ENCODE measurements at regions of chr18 and their contacts with region 1.

Region 1: DNA sequence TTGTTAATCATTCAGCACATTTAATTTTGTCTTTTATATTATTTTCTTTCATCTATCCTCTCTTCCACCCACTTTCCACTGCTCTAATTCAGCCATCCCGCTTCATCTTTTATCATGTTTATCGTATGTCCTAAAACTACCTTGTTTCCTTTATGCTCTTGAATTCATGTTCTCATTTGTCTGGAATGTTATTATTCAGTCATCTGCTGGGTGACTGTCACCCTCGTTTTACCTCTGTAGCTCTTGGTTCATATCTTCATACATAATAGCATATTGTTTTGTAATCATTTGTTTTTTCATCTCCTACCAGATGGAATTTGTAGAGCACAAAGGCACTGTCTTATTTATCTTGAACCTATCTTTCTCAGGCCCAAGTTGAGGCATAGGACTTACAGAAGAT is 37.0 kb downstream of the SMCHD1 start:
- DNase-seq: no peak
- ATAC-seq: no peak
- H3K4me3 Mint-ChIP-seq: no peak overlapping the region
- H3K27ac Mint-ChIP-seq: no peak overlapping the region
- H3K4me1 Mint-ChIP-seq: peaks cover 21% of the 10 kb centered on the region
- H3K27me3 Mint-ChIP-seq: no peaks in the 10 kb centered on the region
- CTCF ChIP-seq: no peak

Region 2: DNA sequence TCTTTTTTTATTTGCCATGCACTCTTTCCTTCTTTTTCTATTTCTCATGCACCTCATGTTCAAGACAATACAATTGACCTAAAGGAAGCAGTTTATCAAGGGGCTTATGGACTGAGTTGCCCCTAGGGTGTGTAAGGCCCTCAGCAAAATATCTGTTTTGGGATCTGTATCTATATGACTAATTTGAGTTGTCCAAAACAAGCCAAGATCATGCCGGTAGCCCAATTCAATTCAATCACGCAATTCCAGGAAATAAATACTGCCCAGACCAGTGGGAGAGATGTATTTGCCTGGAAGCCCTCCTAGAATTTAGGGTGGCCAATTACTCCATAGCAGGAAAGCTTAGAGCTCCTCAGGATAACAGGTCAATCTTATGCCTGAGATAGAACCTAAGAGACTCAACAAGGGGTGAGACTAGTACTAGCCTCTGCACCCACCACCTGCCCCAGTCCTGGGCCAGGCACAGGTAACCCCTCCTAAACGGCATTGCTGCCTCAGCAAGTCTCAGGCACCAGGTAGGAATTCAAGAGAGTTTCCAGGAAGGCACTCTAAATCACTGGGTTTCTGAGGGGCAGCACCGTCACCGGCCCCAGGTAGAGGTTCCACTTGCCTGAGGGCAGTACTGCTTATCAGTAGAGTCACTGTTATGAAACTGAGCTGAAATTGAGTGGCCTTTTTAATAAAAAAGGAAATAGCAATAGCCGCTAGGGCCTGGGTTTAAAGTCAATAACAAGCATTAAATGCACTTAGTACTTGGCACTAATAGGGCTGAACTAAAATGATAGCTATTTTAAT is 775.2 kb before region 1 on chr18:
- CTCF ChIA-PET with region 1: no interaction called
- POLR2A ChIA-PET with region 1: no interaction called
- intact Hi-C with region 1: no loop called
- DNase-seq: no peak
- ATAC-seq: no peak
- H3K4me3 Mint-ChIP-seq: no peak overlapping the region
- H3K27ac Mint-ChIP-seq: no peak overlapping the region
- H3K4me1 Mint-ChIP-seq: no peaks in the 10 kb centered on the region
- H3K27me3 Mint-ChIP-seq: no peaks in the 10 kb centered on the region
- CTCF ChIP-seq: no peak

Region 3: DNA sequence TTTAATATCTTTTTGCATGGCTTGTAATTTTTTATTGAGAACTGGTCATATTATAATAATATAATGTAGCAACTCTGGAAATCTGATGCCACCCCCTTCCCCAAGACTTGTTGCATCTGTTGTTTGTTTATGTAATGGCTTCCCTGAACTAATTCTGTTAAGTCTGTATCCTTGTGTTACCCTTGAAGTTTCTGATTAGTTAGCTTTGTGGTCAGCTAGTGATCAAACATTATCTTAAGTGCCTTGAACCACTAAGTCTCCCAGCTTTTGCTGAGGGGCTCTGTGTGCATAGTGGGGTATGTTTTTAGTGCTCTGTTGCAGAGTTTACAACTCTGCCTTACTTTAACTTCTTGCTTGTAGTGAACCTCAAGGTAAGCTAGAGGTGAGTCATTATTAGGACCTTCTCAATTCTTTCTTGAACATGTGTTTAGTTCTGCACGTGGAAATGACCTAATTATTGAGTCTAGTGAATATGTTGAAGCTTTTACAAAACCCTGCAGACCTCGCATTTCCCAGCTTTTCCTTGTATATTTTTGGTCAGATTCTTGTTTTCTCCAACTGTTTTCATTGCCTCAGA is 12.2 kb before region 1 on chr18:
- CTCF ChIA-PET with region 1: no interaction called
- POLR2A ChIA-PET with region 1: no interaction called
- intact Hi-C with region 1: loop called (anchors 2 kb)
- DNase-seq: no peak
- ATAC-seq: no peak
- H3K4me3 Mint-ChIP-seq: no peak overlapping the region
- H3K27ac Mint-ChIP-seq: peak overlapping the region; percentile 47
- H3K4me1 Mint-ChIP-seq: peaks cover 35% of the 10 kb centered on the region
- H3K27me3 Mint-ChIP-seq: no peaks in the 10 kb centered on the region
- CTCF ChIP-seq: no peak

Region 4: DNA sequence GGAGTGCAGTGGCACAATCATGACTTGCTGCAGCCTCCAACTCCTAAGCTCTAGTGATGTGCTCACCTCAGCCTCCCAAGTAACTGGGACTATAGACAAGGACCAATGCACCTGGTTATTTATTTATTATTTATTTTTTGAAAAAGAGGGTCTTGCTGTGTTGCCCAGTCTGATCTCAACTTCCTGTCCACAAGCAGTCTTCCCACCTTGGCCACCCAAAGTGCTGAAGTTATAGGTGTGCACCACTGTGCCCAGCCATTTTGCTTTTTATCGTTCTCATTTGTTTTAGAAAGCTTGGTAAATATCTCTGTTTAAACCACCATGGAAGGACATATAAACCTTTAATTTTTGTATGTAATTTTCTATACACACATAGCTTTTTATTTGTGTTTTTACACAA is 37.2 kb after region 1 on chr18:
- CTCF ChIA-PET with region 1: no interaction called
- POLR2A ChIA-PET with region 1: no interaction called
- intact Hi-C with region 1: loop called (anchors 5 kb)
- DNase-seq: no peak
- ATAC-seq: no peak
- H3K4me3 Mint-ChIP-seq: no peak overlapping the region
- H3K27ac Mint-ChIP-seq: no peak overlapping the region
- H3K4me1 Mint-ChIP-seq: peaks cover 3% of the 10 kb centered on the region
- H3K27me3 Mint-ChIP-seq: no peaks in the 10 kb centered on the region
- CTCF ChIP-seq: no peak

Measured in activated B cell treated with CpG ODN at 0.5 μM for 24 hours (primary cell).